Esophagus muscularis mucosa (tissue), 4 donors: ENCODE measurements at regions of chr1 and their contacts with region 1.

Region 1: GRCh38 chr1:37434292-37434907 is 40.0 kb upstream of the ZC3H12A start:
- DNase-seq: no peak
- H3K4me3 ChIP-seq: no peak overlapping the region
- H3K27ac ChIP-seq: no peak overlapping the region
- H3K4me1 ChIP-seq: no peaks in the 10 kb centered on the region
- H3K27me3 ChIP-seq: peaks cover 0 to 75% (median 7%) of the 10 kb centered on the region in 4 donors
- CTCF ChIP-seq: peak; percentile 76 to 93 (median 90)
- EP300 ChIP-seq: no peak
- POLR2A ChIP-seq: no peak

Region 2: GRCh38 chr1:36516372-36517325 is 917.8 kb before region 1 on chr1:
- intact Hi-C with region 1: loop called (anchors 5 kb)
- DNase-seq: no peak
- H3K4me3 ChIP-seq: no peak overlapping the region
- H3K27ac ChIP-seq: no peak overlapping the region
- H3K4me1 ChIP-seq: no peaks in the 10 kb centered on the region
- H3K27me3 ChIP-seq: peaks cover 0 to 30% (median 0%) of the 10 kb centered on the region in 4 donors
- CTCF ChIP-seq: peak; percentile 30 to 53 (median 42)
- EP300 ChIP-seq: no peak
- POLR2A ChIP-seq: no peak

Region 3: GRCh38 chr1:36576118-36576517 is 858.3 kb before region 1 on chr1:
- intact Hi-C with region 1: loop called (anchors 5 kb)
- DNase-seq: no peak
- H3K4me3 ChIP-seq: no peak overlapping the region
- H3K27ac ChIP-seq: no peak overlapping the region
- H3K4me1 ChIP-seq: no peaks in the 10 kb centered on the region
- H3K27me3 ChIP-seq: peaks cover 0 to 86% (median 12%) of the 10 kb centered on the region in 4 donors
- CTCF ChIP-seq: peak; percentile 39 to 80 (median 50)
- EP300 ChIP-seq: no peak
- POLR2A ChIP-seq: no peak

Region 4: GRCh38 chr1:36703526-36704208 is 730.7 kb before region 1 on chr1:
- intact Hi-C with region 1: loop called (anchors 5 kb)
- DNase-seq: no peak
- H3K4me3 ChIP-seq: no peak overlapping the region
- H3K27ac ChIP-seq: no peak overlapping the region
- H3K4me1 ChIP-seq: peaks cover 0 to 7% (median 0%) of the 10 kb centered on the region in 4 donors
- H3K27me3 ChIP-seq: peaks cover 0 to 67% (median 4%) of the 10 kb centered on the region in 4 donors
- CTCF ChIP-seq: peak; percentile 75 to 82 (median 79)
- EP300 ChIP-seq: no peak
- POLR2A ChIP-seq: no peak

Region 5: GRCh38 chr1:37509181-37509580 is 74.8 kb after region 1 on chr1:
- intact Hi-C with region 1: no loop called
- DNase-seq: no peak
- H3K4me3 ChIP-seq: no peak overlapping the region
- H3K27ac ChIP-seq: no peak overlapping the region
- H3K4me1 ChIP-seq: peaks cover 10 to 29% (median 21%) of the 10 kb centered on the region in 4 donors
- H3K27me3 ChIP-seq: no peaks in the 10 kb centered on the region
- CTCF ChIP-seq: no peak
- EP300 ChIP-seq: no peak
- POLR2A ChIP-seq: no peak